GM18951 (cell line): ENCODE measurements at regions of chr4 and their contacts with region 1.

Region 1: GRCh38 chr4:17810260-17811077 is at the starts of genes DCAF16 and NCAPG:
- POLR2A ChIP-seq: peak; percentile 91

Region 2: DNA sequence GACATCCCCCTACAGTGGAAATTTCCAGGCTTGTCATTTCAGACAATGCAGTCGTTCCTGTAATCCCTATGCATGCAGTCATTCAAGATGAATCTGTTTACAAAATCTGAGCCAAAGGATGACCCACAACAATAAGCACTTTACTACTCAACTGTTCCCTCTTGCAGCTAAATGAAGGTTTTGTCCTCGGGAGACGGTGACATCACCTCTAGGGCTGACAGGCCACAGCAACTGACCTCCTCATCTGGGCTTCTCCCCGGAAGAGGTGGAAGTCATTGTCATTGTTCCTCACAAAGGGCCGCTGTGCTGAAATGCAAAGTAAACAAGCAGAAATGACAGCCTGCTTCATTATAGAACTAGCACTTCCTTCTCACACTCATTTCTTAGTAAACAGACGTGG is 266.3 kb before region 1 on chr4:
- in situ Hi-C with region 1: loop called (anchors 10 kb)
- POLR2A ChIP-seq: no peak

Region 3: GRCh38 chr4:18366892-18367291 is 556.4 kb after region 1 on chr4:
- in situ Hi-C with region 1: loop called (anchors 10 kb)
- POLR2A ChIP-seq: no peak

Region 4: GRCh38 chr4:18593445-18594002 is 783.1 kb after region 1 on chr4:
- in situ Hi-C with region 1: loop called (anchors 25 kb)
- POLR2A ChIP-seq: no peak